ENCODE measurements at regions of chr13 and their contacts with region 1.

Region 1: GRCh38 chr13:73058736-73059459 is at the start of gene KLF5:
- DNase-seq: peak; percentile 92 to 99
- H3K4me3 ChIP-seq: peak within 1 kb of the TSS; percentile 89
- H3K27ac ChIP-seq: peak within 1 kb of the TSS; percentile 96
- H3K4me1 ChIP-seq: peaks cover 62% of the 10 kb centered on the region
- H3K27me3 ChIP-seq: no peaks in the 10 kb centered on the region
- CTCF ChIP-seq: no peak
- total RNA-seq, gene KLF5: 54.3 and 65.9 TPM in 2 replicates

Region 2: DNA sequence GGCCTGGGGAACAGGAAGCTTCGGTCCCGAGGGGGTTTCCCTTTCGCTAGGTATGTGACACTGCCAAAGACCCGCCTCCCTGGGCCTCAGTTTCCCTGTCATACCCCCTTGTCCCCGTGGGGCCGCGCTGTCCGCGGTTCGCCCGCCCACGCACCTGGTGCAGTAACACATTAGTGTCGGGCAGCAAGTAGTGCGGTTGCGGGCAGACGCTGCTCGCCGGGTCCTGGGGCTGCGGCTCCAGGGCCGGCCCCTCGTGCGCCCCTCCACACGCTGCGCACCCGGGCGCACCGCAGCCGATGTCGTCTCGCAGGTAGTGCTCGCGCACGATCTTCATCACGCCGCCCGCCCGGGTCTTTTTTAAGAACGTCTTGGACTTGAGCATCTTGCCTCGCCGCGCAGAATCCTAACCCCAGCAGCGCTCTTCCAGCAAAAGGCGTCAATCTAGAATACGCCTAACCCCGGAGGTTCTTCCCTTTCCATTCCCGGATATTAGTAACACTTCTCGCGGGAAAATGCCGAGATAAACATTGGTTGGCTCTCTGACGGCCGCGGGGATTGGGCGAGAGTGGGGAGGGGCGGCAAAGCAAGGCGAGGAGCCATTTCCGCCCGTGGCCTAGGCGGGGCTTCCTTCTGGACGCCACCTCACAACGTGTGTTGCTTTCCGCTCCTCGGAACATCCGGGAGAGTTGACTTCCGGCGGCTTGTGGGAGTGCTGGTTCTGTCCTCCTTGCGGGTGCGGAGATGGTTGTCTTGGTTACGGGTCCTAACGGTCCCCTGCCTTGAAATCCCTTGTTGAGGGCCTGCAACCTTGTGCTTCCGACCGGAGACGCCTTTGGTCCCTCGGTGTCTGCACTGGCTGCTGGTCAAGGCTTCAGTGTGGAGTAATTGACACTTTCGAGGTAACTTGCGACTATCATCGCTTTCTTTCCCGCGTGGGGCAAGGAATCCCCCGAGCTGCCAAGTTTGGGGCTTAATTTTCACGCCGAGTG is 277.2 kb before region 1 on chr13 and contains the starts of genes DIS3 and PIBF1:
- CTCF ChIA-PET with region 1: no interaction called
- POLR2A ChIA-PET with region 1: interaction called, 6 read pairs
- intact Hi-C with region 1: loop called (anchors 5 kb)
- DNase-seq: peak; percentile 96
- H3K4me3 ChIP-seq: peak within 1 kb of the TSS; percentile 92
- H3K27ac ChIP-seq: peak within 1 kb of the TSS; percentile 55
- H3K4me1 ChIP-seq: peaks cover 26% of the 10 kb centered on the region
- H3K27me3 ChIP-seq: no peaks in the 10 kb centered on the region
- CTCF ChIP-seq: no peak
- total RNA-seq, gene DIS3: 23.6 and 27.2 TPM in 2 replicates
- total RNA-seq, gene PIBF1: 15.0 and 20.3 TPM in 2 replicates

Region 3: DNA sequence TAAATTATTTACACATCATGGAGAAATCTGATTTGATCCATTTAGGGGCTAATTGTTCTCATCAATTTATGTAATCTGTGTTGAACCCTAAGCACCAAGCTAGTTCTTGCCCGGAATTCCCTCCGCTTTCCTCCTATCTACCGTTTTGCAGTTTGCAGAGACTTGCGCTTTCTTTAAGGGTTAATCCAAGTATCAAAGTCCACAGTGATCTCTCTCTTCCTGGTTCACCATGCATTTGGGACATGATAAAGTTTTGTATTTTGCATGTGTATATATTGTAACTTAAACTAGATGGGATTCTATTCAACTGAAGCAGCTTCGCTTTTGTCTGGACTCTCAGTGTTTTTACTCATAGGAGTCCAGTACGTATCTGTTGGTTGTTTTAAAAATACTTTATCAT is 13.9 kb before region 1 on chr13:
- CTCF ChIA-PET with region 1: interaction called, 10 read pairs
- POLR2A ChIA-PET with region 1: no interaction called
- intact Hi-C with region 1: no loop called
- DNase-seq: no peak
- H3K4me3 ChIP-seq: no peak overlapping the region
- H3K27ac ChIP-seq: no peak overlapping the region
- H3K4me1 ChIP-seq: peaks cover 13% of the 10 kb centered on the region; the same call in 1 of the 2 replicates
- H3K27me3 ChIP-seq: no peaks in the 10 kb centered on the region
- CTCF ChIP-seq: no peak

Region 4: DNA sequence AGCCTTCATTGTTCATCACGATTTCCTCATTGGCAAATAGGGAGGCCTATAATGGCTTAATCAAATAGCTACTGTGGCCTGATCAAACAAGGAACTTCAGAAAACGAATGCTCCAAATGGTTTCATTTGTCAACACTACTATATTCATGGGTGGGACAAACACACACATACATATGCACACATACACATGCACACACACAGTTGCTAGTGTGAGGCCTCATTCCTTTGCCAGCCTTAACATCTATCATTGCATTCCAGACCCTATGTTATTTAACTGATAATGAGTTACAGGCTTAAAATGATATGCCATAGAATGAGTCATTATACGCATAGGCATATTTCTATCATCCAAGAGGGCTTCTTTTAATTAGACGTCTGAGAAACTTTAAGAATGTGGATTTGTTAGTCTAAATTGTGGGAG is 140.1 kb after region 1 on chr13:
- CTCF ChIA-PET with region 1: no interaction called
- POLR2A ChIA-PET with region 1: interaction called, 8 read pairs
- intact Hi-C with region 1: loop called (anchors 10 kb)
- DNase-seq: peak in 1 of 2 experiments; percentile 39
- H3K4me3 ChIP-seq: no peak overlapping the region
- H3K27ac ChIP-seq: no peak overlapping the region
- H3K4me1 ChIP-seq: peaks cover 16% of the 10 kb centered on the region
- H3K27me3 ChIP-seq: no peaks in the 10 kb centered on the region
- CTCF ChIP-seq: no peak

Region 5: DNA sequence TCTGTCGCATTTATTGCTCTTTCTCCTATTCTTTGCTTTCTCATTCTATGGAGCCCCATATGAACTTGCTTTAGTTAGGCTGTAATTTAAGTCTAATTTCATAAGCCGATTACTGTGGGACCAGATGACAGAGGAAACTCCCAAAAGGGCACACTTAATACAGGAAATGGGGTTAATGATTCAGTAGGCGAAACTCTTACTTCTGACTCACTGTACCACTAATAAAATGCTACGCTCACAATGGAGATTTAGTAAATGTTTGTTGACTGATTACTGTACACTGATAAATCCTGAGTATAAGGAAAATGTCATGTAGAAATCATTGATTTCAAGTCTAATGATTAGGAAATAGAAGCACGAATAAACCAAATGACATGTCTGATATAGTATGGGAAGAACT is 276.3 kb after region 1 on chr13:
- CTCF ChIA-PET with region 1: interaction called, 3 read pairs
- POLR2A ChIA-PET with region 1: no interaction called
- intact Hi-C with region 1: loop called (anchors 2 kb)
- DNase-seq: peak in 1 of 2 experiments; percentile 96
- H3K4me3 ChIP-seq: no peak overlapping the region
- H3K27ac ChIP-seq: peak overlapping the region; percentile 99
- H3K4me1 ChIP-seq: peaks cover 44% of the 10 kb centered on the region
- H3K27me3 ChIP-seq: no peaks in the 10 kb centered on the region
- CTCF ChIP-seq: no peak

Region 6: DNA sequence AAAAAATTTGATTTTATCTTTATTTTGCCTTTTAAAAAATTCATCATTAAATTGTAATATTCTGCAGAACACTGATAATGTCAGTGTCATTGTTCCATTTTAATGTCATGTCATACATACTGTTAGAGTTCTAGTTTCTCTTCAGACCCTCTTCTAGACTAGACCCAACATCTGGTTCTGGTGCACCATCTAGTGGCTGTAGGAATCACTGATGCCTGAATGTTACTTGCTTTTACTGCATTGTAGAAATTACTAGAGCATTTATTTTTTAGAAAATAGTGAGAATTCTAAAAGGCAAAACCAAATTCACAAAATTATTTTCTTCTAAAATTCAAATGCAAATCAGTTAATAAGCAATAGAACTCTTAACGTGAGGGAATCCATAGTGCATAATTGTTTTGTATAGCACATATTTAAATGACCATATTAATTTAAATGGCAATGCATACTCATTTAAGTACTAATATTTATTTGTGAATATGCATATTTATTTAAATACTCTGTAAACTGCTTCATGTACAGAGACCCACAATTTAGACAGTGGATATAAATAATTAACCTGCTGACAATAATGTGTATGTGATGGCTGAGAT is 649.6 kb after region 1 on chr13:
- CTCF ChIA-PET with region 1: no interaction called
- POLR2A ChIA-PET with region 1: interaction called, 37 read pairs
- intact Hi-C with region 1: loop called (anchors 2 kb)
- DNase-seq: peak; percentile 49 to 65
- H3K4me3 ChIP-seq: no peak overlapping the region
- H3K27ac ChIP-seq: no peak overlapping the region
- H3K4me1 ChIP-seq: no peaks in the 10 kb centered on the region
- H3K27me3 ChIP-seq: no peaks in the 10 kb centered on the region
- CTCF ChIP-seq: peak; percentile 95